ENCODE measurements at regions of chr2 and their contacts with region 1.

Region 1: GRCh38 chr2:150319658-150320555 is 167.6 kb downstream of the RND3 start:
- DNase-seq: no peak
- H3K4me3 Mint-ChIP-seq: no peak overlapping the region
- H3K27ac Mint-ChIP-seq: no peak overlapping the region
- H3K4me1 Mint-ChIP-seq: no peaks in the 10 kb centered on the region
- H3K27me3 Mint-ChIP-seq: no peaks in the 10 kb centered on the region
- CTCF ChIP-seq: no peak

Region 2: GRCh38 chr2:151191001-151191400 is 871.1 kb after region 1 on chr2:
- CTCF ChIA-PET with region 1: no interaction called
- POLR2A ChIA-PET with region 1: no interaction called
- intact Hi-C with region 1: loop called (anchors 5 kb)
- DNase-seq: no peak
- H3K4me3 Mint-ChIP-seq: no peak overlapping the region
- H3K27ac Mint-ChIP-seq: no peak overlapping the region
- H3K4me1 Mint-ChIP-seq: no peaks in the 10 kb centered on the region
- H3K27me3 Mint-ChIP-seq: no peaks in the 10 kb centered on the region
- CTCF ChIP-seq: no peak